A673 (cell line): ENCODE measurements at regions of chr21 and their contacts with region 1.

Region 1: DNA sequence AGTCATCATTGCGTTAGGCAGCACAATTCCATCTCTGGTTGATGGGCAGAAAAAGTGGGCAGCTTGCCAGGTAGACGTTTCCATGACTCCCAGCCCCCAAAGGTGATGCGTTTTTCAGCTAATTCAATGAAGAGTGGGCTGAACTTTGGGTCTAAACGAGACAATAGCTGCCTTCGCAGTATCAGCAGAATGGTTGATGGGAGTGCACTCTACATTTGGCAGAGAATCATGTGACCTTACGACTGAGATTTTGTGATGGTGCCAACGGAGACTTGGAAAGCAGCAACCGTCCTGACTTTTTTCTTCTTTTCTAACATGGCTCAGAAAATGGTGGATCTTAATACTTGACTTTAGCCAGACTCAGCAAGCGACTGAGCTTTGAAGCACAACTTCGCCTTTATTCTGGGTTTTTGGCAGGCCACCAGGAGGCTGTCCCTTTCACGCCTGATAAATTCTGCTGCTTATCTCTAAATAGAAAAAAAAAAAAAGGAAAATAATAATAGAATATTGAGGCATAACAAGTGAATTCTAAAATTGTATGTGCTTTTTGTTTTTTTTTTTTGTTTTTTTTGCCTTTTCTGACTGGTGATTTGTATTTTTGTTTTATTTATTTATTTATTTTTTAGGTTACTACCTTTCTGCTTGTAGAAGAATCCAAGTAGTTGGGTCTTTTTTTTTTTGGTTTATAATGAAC is 804.8 kb downstream of the USP25 start:
- DNase-seq: peak; percentile 9
- H3K4me3 ChIP-seq: peak overlapping the region; percentile 53
- H3K27ac ChIP-seq: no peak overlapping the region
- H3K4me1 ChIP-seq: peaks cover 6% of the 10 kb centered on the region
- H3K27me3 ChIP-seq: no peaks in the 10 kb centered on the region
- CTCF ChIP-seq: no peak

Region 2: GRCh38 chr21:15343066-15343465 is 1191.5 kb before region 1 on chr21:
- CTCF ChIA-PET with region 1: no interaction called
- POLR2A ChIA-PET with region 1: no interaction called
- intact Hi-C with region 1: no loop called
- DNase-seq: no peak
- H3K4me3 ChIP-seq: no peak overlapping the region
- H3K27ac ChIP-seq: no peak overlapping the region
- H3K4me1 ChIP-seq: no peaks in the 10 kb centered on the region
- H3K27me3 ChIP-seq: no peaks in the 10 kb centered on the region
- CTCF ChIP-seq: no peak

Region 3: GRCh38 chr21:16592381-16592780 is 57.8 kb after region 1 on chr21:
- CTCF ChIA-PET with region 1: no interaction called
- POLR2A ChIA-PET with region 1: no interaction called
- intact Hi-C with region 1: loop called (anchors 5 kb)
- DNase-seq: no peak
- H3K4me3 ChIP-seq: no peak overlapping the region
- H3K27ac ChIP-seq: no peak overlapping the region
- H3K4me1 ChIP-seq: no peaks in the 10 kb centered on the region
- H3K27me3 ChIP-seq: no peaks in the 10 kb centered on the region
- CTCF ChIP-seq: no peak

Region 4: DNA sequence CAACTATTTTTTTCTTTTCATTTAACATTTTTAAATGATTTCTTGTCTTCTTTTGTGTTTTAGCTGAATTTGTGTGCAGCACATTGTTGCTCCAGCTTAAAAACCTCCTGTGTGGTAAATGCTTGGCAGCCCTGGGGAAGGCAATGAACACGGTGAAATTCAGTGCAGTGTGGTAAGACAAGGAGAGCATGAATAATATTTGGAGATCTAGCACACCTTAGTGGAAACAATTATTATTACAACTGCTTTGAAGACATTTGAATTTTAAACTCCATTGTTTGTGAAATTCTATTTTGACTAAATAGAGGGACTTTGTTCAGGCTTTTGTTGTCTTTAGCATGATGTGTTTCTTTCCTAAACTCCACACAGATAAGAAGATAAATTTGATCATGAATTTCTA is 735.7 kb after region 1 on chr21:
- CTCF ChIA-PET with region 1: no interaction called
- POLR2A ChIA-PET with region 1: no interaction called
- intact Hi-C with region 1: no loop called
- DNase-seq: peak; percentile 44
- H3K4me3 ChIP-seq: no peak overlapping the region
- H3K27ac ChIP-seq: no peak overlapping the region
- H3K4me1 ChIP-seq: no peaks in the 10 kb centered on the region
- H3K27me3 ChIP-seq: no peaks in the 10 kb centered on the region
- CTCF ChIP-seq: peak; percentile 34